ENCODE measurements at regions of chr5 and their contacts with region 1.

Region 1: DNA sequence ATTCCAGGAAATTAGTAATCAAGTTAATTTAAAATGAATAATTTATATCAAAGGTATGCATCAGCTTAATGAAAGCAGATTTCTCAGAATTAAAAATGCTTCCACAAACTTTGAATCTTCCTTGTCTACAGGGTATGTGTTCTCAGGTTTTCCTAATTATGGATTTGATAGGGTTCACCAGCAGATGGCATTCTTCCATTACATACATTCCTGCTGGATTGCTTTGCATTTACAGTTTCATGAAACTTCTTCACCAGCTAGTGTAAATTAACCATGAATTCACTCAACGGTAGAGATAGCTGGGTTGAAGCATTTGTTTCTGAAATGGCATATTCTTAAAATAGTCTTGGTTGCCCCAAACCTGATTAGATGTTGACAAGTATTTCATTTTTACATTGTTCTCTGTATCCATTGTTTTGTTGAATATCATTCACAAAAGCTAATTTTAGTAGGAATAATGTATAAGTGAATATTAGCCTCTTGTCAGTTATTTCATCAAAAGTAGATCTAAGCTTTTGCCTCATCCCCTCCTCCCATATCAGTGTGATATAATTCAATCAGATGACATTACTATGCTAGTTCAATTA is 68.7 kb upstream of the WDR41 start:
- DNase-seq: no peak
- ATAC-seq: no peak
- H3K4me3 Mint-ChIP-seq: no peak overlapping the region
- H3K27ac Mint-ChIP-seq: no peak overlapping the region
- H3K4me1 Mint-ChIP-seq: no peaks in the 10 kb centered on the region
- H3K27me3 Mint-ChIP-seq: peaks cover 4% of the 10 kb centered on the region

Region 2: GRCh38 chr5:77972469-77973252 is 411.9 kb after region 1 on chr5:
- CTCF ChIA-PET with region 1: no interaction called
- POLR2A ChIA-PET with region 1: no interaction called
- intact Hi-C with region 1: loop called (anchors 5 to 10 kb)
- DNase-seq: peak; percentile 55
- ATAC-seq: peak; percentile 65
- H3K4me3 Mint-ChIP-seq: peak overlapping the region; percentile 56
- H3K27ac Mint-ChIP-seq: no peak overlapping the region
- H3K4me1 Mint-ChIP-seq: peaks cover 12% of the 10 kb centered on the region
- H3K27me3 Mint-ChIP-seq: peaks cover 51% of the 10 kb centered on the region

Region 3: DNA sequence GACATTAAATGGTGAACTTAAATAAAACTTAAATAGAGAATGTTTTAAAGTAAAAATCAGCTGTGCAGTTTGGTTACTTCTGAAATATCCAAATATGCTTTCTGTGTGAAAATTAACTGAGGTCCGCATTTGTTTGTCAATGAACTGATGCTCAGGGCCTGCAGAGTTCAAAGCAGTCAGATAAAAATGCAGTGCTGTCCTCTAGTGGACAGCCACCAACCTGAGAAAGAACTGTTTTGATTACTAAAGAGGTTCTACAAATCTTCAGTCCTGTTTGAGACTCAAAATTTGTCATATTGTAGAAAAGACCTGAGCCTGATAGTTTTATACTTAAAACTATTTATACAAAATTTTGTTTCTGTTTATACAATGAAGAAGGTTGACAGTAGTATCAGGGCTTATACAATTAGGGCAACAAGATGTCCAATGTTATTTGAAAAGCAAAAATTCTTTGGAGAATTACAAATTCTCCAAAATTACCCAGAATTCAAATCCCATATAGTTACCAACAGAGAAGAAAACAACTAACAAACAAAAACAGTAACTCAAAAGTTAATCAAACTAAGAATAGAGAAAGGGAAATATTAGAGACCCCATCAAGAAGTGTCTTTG is 447.7 kb after region 1 on chr5:
- CTCF ChIA-PET with region 1: no interaction called
- POLR2A ChIA-PET with region 1: no interaction called
- intact Hi-C with region 1: loop called (anchors 1 kb)
- DNase-seq: peak; percentile 10
- ATAC-seq: no peak
- H3K4me3 Mint-ChIP-seq: no peak overlapping the region
- H3K27ac Mint-ChIP-seq: no peak overlapping the region
- H3K4me1 Mint-ChIP-seq: no peaks in the 10 kb centered on the region
- H3K27me3 Mint-ChIP-seq: no peaks in the 10 kb centered on the region

Region 4: GRCh38 chr5:78162253-78162862 is 601.6 kb after region 1 on chr5:
- CTCF ChIA-PET with region 1: no interaction called
- POLR2A ChIA-PET with region 1: no interaction called
- intact Hi-C with region 1: loop called (anchors 5 to 10 kb)
- DNase-seq: peak; percentile 9
- ATAC-seq: no peak
- H3K4me3 Mint-ChIP-seq: no peak overlapping the region
- H3K27ac Mint-ChIP-seq: no peak overlapping the region
- H3K4me1 Mint-ChIP-seq: no peaks in the 10 kb centered on the region
- H3K27me3 Mint-ChIP-seq: no peaks in the 10 kb centered on the region

Region 5: DNA sequence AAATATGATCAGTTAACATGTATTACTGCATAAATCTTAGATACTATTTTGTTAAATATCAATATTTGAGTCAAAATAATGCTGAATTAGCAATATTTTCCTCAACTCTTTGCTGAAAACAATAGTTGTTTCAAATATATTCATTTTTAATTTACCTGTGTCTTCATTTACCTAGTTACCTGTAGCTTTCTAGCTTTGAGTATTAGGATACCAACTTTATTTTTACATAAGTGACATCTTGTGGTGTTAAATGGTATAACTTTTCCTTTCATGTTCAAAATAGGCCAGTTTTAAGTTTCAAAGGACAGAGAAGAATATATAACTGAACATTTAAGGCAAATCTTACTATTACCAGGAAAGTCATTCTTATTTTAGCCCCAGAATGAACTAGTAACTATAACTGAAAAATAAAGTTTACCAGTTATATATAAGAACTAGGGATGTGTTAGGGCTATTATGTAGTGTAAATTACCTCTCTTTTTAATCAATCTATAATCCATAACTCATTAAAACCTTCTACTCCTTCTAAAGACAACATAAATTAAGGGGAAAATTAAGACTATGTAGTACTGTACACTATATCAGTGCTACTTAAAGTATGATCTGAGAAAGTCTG is 708.4 kb after region 1 on chr5:
- CTCF ChIA-PET with region 1: no interaction called
- POLR2A ChIA-PET with region 1: no interaction called
- intact Hi-C with region 1: loop called in 1 of 2 experiments (anchors 2 kb)
- DNase-seq: no peak
- ATAC-seq: no peak
- H3K4me3 Mint-ChIP-seq: no peak overlapping the region
- H3K27ac Mint-ChIP-seq: no peak overlapping the region
- H3K4me1 Mint-ChIP-seq: peaks cover 15% of the 10 kb centered on the region
- H3K27me3 Mint-ChIP-seq: no peaks in the 10 kb centered on the region

Region 6: GRCh38 chr5:78294248-78295034 is 733.7 kb after region 1 on chr5 and contains the start of gene AP3B1:
- CTCF ChIA-PET with region 1: no interaction called
- POLR2A ChIA-PET with region 1: no interaction called
- intact Hi-C with region 1: loop called in 1 of 2 experiments (anchors 10 kb)
- DNase-seq: peak; percentile 99
- ATAC-seq: peak; percentile 94
- H3K4me3 Mint-ChIP-seq: peak within 1 kb of the TSS; percentile 88
- H3K27ac Mint-ChIP-seq: peak within 1 kb of the TSS; percentile 99
- H3K4me1 Mint-ChIP-seq: peaks cover 33% of the 10 kb centered on the region
- H3K27me3 Mint-ChIP-seq: no peaks in the 10 kb centered on the region
- total RNA-seq, gene AP3B1: 41.2 to 55.7 TPM